ENCODE measurements at regions of chr6 and their contacts with region 1.

Region 1: DNA sequence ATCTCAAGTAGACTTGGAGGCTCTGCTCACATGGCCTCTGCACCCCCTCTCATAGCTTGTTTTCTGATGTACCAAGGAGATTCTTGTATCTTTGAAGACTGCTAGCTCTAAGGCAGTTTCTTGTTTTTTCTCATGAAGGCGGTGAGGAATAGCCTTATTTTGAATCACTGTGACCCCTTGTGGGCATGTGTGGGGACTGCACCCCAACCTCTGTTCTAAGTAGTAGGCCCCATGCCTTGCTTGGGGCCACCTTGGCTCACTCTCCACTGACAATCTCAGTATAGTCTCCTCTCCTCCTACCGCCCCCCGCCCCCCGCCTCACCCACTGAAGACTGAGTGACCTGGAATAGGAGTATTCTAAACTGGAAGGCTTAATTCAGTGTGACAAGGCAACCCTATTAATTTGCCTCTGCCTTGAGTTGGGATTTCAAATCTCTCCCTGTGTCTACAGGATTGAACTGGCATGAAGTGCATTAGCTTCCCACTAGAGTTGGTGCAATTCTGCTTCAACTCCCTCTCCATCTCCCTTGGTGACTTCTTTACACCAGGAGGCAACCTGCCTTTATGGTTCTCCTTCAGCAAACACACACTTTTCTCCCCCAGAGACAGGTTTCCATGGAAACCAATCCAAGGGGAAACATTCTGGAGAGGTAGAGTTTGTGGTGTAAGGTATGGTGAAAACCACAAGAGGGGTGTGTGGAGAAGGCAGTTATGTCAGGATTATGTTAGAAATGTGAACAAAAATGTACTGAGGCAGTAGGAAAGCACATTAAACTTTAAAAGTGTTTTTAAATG is 75.5 kb upstream of the ECI2 start:
- DNase-seq: peak; percentile 60

Region 2: GRCh38 chr6:4225161-4225872 is 14.5 kb after region 1 on chr6:
- CTCF ChIA-PET with region 1: interaction called, 12 read pairs
- POLR2A ChIA-PET with region 1: no interaction called
- DNase-seq: no peak

Region 3: GRCh38 chr6:4253604-4254231 is 42.9 kb after region 1 on chr6:
- CTCF ChIA-PET with region 1: no interaction called
- POLR2A ChIA-PET with region 1: no interaction called
- DNase-seq: peak; percentile 57

Region 4: GRCh38 chr6:4435981-4436445 is 225.2 kb after region 1 on chr6:
- CTCF ChIA-PET with region 1: no interaction called
- POLR2A ChIA-PET with region 1: no interaction called
- DNase-seq: no peak

Measured in HEK293T (cell line).